ENCODE measurements at regions of chr16 and their contacts with region 1.

Region 1: GRCh38 chr16:17013038-17013437 is 457.7 kb downstream of the XYLT1 start:
- DNase-seq: no peak
- ATAC-seq: no peak
- H3K4me3 ChIP-seq: no peak overlapping the region
- H3K27ac ChIP-seq: peak overlapping the region; percentile 65; the same call in 1 of the 2 replicates
- H3K4me1 ChIP-seq: peaks cover 8% of the 10 kb centered on the region; the same call in 1 of the 2 replicates
- H3K27me3 ChIP-seq: no peaks in the 10 kb centered on the region
- CTCF ChIP-seq: no peak
- EP300 ChIP-seq: no peak
- POLR2A ChIP-seq: no peak
- RAD21 ChIP-seq: no peak

Region 2: GRCh38 chr16:17026600-17027242 is 13.7 kb after region 1 on chr16:
- CTCF ChIA-PET with region 1: interaction called, 6 read pairs
- POLR2A ChIA-PET with region 1: interaction called, 7 read pairs
- RAD21 ChIA-PET with region 1: interaction called, 10 read pairs
- SMC1A ChIA-PET with region 1: interaction called, 15 read pairs
- in situ Hi-C with region 1: no loop called
- intact Hi-C with region 1: loop called (anchors 1 kb)
- DNase-seq: peak; percentile 92
- ATAC-seq: peak; percentile 83
- H3K4me3 ChIP-seq: peak overlapping the region; percentile 19; the same call in 1 of the 2 replicates
- H3K27ac ChIP-seq: peak overlapping the region; percentile 96
- H3K4me1 ChIP-seq: peaks cover 40% of the 10 kb centered on the region
- H3K27me3 ChIP-seq: no peaks in the 10 kb centered on the region
- CTCF ChIP-seq: no peak
- EP300 ChIP-seq: peak; percentile 91 to 97
- POLR2A ChIP-seq: no peak
- RAD21 ChIP-seq: peak; percentile 36